PC-9 (cell line): ENCODE measurements at regions of chr12 and their contacts with region 1.

Region 1: GRCh38 chr12:16198884-16199283 is 78.6 kb downstream of the SLC15A5 start:
- DNase-seq: no peak
- H3K4me3 ChIP-seq: no peak overlapping the region
- H3K27ac ChIP-seq: no peak overlapping the region
- H3K4me1 ChIP-seq: no peaks in the 10 kb centered on the region
- H3K27me3 ChIP-seq: no peaks in the 10 kb centered on the region
- CTCF ChIP-seq: no peak

Region 2: DNA sequence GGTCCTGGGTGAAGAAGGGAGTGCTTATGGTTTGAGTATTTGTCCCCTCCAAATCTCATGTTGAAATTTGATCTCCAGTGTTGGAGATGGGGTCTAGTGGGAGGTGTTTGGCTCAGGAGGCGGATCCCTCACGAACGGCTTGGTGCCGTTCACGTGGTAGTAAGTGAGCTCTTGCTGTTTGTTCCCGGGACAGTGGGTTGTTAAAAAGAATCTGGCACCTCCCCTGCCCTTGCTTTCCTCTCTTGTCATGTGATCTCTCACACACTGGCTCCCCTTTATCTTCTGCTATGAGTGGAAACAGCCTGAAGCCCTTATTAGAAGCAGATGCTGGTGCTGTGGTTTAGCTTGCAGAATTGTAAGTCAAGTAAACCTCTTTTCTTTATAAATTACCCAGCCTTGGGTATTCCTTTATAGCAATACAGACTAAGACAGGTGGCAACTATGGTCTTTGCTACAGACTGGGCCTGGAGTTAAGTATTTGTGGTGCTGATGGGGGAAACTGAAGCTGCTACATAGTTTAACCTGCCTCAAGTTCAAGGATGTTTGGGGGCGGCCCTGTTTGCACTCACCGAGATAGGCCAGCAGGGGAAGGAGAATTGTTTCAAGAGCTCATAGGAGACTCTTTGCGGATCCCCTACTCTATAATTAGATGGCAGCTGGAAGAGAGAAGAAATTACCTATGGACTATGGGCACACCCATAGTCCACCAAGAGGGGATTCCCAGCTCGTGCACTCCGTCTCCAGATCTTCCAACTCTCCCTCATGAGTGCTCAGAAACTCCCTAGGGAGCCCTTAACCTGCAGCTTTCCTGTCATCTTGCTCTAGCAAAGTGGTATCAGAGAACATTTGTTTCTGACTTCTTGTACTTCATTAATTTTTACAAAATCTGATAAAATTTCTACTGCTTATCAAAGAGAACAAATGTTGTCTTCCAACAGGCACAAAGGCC is 86.0 kb before region 1 on chr12:
- CTCF ChIA-PET with region 1: no interaction called
- POLR2A ChIA-PET with region 1: interaction called, 11 read pairs
- intact Hi-C with region 1: no loop called
- DNase-seq: no peak
- H3K4me3 ChIP-seq: no peak overlapping the region
- H3K27ac ChIP-seq: no peak overlapping the region
- H3K4me1 ChIP-seq: no peaks in the 10 kb centered on the region
- H3K27me3 ChIP-seq: no peaks in the 10 kb centered on the region
- CTCF ChIP-seq: no peak

Region 3: DNA sequence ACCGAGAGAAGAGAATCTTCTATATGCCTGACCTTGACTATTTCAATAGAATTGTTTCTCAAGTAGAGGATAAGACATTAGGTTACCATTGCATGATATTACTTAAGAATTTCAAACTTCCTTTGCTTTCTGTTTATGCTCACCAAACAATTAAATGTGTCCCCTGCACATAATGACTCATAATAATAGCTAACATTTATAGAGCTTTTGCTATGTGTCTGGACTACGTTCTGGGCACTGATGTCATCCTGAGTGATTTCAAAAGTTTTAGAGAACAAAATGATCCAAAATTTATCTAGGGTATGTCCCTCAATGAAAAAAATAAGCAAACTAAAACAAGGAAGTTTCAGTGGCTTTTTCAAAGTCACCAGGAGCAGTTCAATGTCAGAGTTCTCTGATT is 39.8 kb after region 1 on chr12:
- CTCF ChIA-PET with region 1: no interaction called
- POLR2A ChIA-PET with region 1: no interaction called
- intact Hi-C with region 1: no loop called
- DNase-seq: no peak
- H3K4me3 ChIP-seq: no peak overlapping the region
- H3K27ac ChIP-seq: no peak overlapping the region
- H3K4me1 ChIP-seq: no peaks in the 10 kb centered on the region
- H3K27me3 ChIP-seq: no peaks in the 10 kb centered on the region
- CTCF ChIP-seq: no peak

Region 4: DNA sequence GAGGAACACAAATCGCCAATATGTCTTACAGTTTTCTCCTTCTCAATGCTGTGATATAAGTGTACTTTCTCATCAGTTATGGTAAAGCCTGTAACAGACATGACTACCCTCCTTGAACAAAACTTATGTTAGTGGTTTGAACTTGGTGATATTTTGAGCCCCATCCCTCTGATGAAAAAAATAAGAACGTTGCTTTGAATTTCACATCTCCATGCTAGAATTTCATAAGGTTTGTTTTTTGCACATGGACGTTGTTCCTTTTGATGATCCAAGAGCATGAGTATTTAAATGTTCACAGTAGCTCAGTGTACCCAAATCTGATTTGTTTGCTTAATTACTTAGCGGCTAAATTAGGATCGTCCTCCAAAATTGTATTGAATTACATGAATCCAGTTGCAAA is 78.7 kb after region 1 on chr12 and contains the start of gene SLC15A5:
- CTCF ChIA-PET with region 1: no interaction called
- POLR2A ChIA-PET with region 1: no interaction called
- intact Hi-C with region 1: loop called (anchors 5 kb)
- DNase-seq: no peak
- H3K4me3 ChIP-seq: no peak within 1 kb of the TSS
- H3K27ac ChIP-seq: no peak within 1 kb of the TSS
- H3K4me1 ChIP-seq: no peaks in the 10 kb centered on the region
- H3K27me3 ChIP-seq: no peaks in the 10 kb centered on the region
- CTCF ChIP-seq: no peak
- total RNA-seq, gene SLC15A5: not detected in 2 replicates

Region 5: DNA sequence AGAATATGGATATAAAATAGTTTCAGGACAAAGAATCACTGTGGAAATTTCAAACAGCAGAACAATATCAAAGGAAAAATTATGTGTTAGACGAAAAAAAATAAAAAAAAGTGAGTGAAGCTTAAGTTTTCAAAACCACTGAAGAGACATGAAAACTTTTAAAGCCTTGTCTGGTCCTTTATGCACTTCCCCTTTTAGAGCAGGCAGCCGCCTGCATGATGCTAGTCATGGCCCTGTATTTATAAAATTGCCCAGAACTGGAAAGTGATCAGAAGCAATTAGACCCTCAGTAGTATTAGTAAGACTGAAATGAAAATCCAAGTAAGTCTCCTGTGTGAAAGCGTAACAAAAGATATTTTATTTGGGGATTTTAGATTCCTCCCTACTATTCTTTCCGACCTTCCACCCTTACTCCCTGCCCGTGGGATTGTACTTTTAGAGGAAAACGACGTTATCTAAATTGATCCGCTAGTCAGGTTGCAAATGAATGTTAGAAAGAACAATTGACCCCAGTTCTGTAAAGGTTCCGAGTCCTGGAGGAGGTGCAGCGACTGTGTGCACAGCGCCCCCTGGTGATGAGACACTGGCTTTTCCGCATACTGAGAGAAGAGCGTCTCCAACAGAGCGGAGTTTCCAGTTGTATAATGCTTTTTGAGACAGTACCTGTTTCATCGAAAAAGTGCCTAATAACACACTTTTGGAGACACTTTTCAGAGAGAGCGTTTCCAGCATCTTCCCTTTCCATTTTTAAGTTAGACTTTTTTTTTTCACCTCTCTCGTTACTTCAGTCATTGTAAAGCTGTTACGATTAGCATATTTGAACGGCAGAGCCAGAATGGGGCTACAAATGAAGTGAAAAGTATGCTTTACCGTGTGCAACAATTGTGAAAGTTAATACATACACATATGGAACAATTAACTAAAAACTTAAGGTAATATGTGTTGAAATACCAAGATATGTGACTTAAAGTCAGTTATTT is 160.9 kb after region 1 on chr12:
- CTCF ChIA-PET with region 1: no interaction called
- POLR2A ChIA-PET with region 1: no interaction called
- intact Hi-C with region 1: no loop called
- DNase-seq: peak in 1 of 2 experiments; percentile 53
- H3K4me3 ChIP-seq: no peak overlapping the region
- H3K27ac ChIP-seq: no peak overlapping the region; the same call in 1 of the 2 replicates
- H3K4me1 ChIP-seq: 0 out of 2 replicates have a peak, but pooled peaks cover under 1% of the 10 kb centered on the region
- H3K27me3 ChIP-seq: no peaks in the 10 kb centered on the region
- CTCF ChIP-seq: peak; percentile 95

Region 6: GRCh38 chr12:16399101-16399500 is 200.2 kb after region 1 on chr12:
- CTCF ChIA-PET with region 1: no interaction called
- POLR2A ChIA-PET with region 1: no interaction called
- intact Hi-C with region 1: no loop called
- DNase-seq: no peak
- H3K4me3 ChIP-seq: no peak overlapping the region
- H3K27ac ChIP-seq: no peak overlapping the region
- H3K4me1 ChIP-seq: no peaks in the 10 kb centered on the region
- H3K27me3 ChIP-seq: no peaks in the 10 kb centered on the region
- CTCF ChIP-seq: no peak

Region 7: GRCh38 chr12:16573398-16574077 is 374.7 kb after region 1 on chr12:
- CTCF ChIA-PET with region 1: no interaction called
- POLR2A ChIA-PET with region 1: no interaction called
- intact Hi-C with region 1: no loop called
- DNase-seq: no peak
- H3K4me3 ChIP-seq: no peak overlapping the region
- H3K27ac ChIP-seq: no peak overlapping the region
- H3K4me1 ChIP-seq: no peaks in the 10 kb centered on the region
- H3K27me3 ChIP-seq: no peaks in the 10 kb centered on the region
- CTCF ChIP-seq: no peak